ENCODE measurements at regions of chr4 and their contacts with region 1.

Region 1: DNA sequence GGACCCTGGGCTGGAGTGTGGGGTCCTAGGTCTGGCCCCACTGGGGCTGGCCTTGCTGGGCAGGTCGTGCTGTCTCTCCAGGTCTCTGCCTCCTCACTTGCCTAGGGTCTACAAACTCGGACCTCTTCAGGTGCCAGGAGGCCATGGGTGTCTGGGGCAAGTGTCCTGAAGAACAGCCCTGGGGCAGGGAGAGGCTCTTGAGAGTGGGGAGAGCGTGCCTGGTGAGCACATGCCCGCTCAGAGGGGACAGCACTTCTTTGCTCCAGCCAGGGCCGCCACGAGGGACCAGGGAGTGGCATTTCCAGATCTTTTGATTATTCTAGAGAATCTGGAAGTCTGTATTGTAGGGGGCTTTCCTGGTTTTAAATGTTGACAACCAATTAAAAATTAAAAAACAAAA is 63.7 kb downstream of the SORCS2 start:
- DNase-seq: no peak
- H3K4me3 ChIP-seq: no peak overlapping the region
- H3K27ac ChIP-seq: no peak overlapping the region
- H3K4me1 ChIP-seq: no peaks in the 10 kb centered on the region
- H3K27me3 ChIP-seq: no peaks in the 10 kb centered on the region
- CTCF ChIP-seq: no peak

Region 2: DNA sequence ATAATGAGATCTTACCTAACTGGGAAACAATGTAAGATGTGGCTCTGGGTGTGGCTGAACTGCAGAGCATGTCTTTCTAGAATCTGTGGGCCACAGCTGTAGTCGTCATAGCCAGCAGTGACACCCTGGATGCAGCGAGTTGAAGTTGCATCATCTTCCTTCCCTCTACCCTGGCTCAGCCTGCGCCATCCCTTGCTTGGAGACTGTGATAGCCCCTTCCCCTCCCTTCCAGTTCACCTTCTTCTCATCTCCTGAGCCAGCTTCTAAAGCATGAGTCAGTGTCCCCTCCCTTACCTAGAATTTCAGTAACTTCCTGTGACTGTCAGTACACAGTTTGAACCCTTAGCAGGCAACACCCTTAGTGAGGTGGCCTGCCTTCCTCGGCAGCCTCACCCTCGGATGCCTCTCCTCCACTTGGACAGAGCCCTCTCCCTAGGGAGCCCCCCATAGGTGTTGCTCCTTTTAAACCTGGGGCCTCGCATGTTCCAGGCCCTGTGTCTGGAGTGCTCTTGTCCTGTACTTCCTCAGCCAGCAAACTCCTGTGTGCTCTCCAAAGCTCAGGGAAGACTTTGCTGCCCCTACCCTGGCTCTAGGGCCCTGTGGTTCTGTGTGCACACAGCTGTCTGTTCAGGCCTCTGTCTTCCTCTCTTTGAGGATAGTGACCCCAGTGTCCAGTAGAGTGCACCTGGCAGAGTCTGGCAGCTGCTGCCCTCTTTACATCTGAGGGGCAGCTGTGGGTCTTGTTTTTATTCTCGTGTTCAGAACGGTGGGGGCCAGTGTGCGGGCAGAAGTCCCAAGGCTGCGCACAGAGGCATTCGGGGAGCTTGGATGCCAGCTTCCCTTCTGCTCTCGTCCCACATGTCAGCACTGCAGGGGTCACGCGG is 256.6 kb before region 1 on chr4:
- CTCF ChIA-PET with region 1: no interaction called
- POLR2A ChIA-PET with region 1: no interaction called
- intact Hi-C with region 1: no loop called
- DNase-seq: peak; percentile 79 to 93
- H3K4me3 ChIP-seq: no peak overlapping the region
- H3K27ac ChIP-seq: peak overlapping the region; percentile 86
- H3K4me1 ChIP-seq: peaks cover 26% of the 10 kb centered on the region
- H3K27me3 ChIP-seq: no peaks in the 10 kb centered on the region
- CTCF ChIP-seq: no peak

Region 3: GRCh38 chr4:7238300-7238960 is 17.6 kb before region 1 on chr4:
- CTCF ChIA-PET with region 1: interaction called, 18 read pairs
- POLR2A ChIA-PET with region 1: no interaction called
- intact Hi-C with region 1: no loop called
- DNase-seq: no peak
- H3K4me3 ChIP-seq: no peak overlapping the region
- H3K27ac ChIP-seq: no peak overlapping the region
- H3K4me1 ChIP-seq: no peaks in the 10 kb centered on the region
- H3K27me3 ChIP-seq: no peaks in the 10 kb centered on the region
- CTCF ChIP-seq: 0 out of 2 replicates have a peak, but pooled peaks have one; percentile 33

Region 4: GRCh38 chr4:7266525-7267292 is 10.7 kb after region 1 on chr4:
- CTCF ChIA-PET with region 1: no interaction called
- POLR2A ChIA-PET with region 1: no interaction called
- intact Hi-C with region 1: no loop called
- DNase-seq: peak; percentile 42 to 77
- H3K4me3 ChIP-seq: no peak overlapping the region
- H3K27ac ChIP-seq: peak overlapping the region; percentile 73
- H3K4me1 ChIP-seq: peaks cover 42% of the 10 kb centered on the region
- H3K27me3 ChIP-seq: no peaks in the 10 kb centered on the region
- CTCF ChIP-seq: no peak

Measured in PC-9 (cell line).